Activated CD8-positive, alpha-beta T cell treated with anti-CD3 and anti-CD28 coated beads for 36 hours (primary cell): ENCODE measurements at regions of chr10 and their contacts with region 1.

Region 1: GRCh38 chr10:69914398-69915214 is 112.9 kb downstream of the COL13A1 start:
- DNase-seq: peak; percentile 81
- ATAC-seq: peak; percentile 97
- H3K4me3 Mint-ChIP-seq: no peak overlapping the region
- H3K27ac Mint-ChIP-seq: no peak overlapping the region
- H3K4me1 Mint-ChIP-seq: no peaks in the 10 kb centered on the region
- H3K27me3 Mint-ChIP-seq: peaks cover 1% of the 10 kb centered on the region
- CTCF ChIP-seq: peak; percentile 96

Region 2: GRCh38 chr10:69786791-69787190 is 127.8 kb before region 1 on chr10:
- CTCF ChIA-PET with region 1: interaction called, 40 read pairs
- POLR2A ChIA-PET with region 1: no interaction called
- intact Hi-C with region 1: loop called (anchors 10 kb)
- DNase-seq: no peak
- ATAC-seq: peak; percentile 62
- H3K4me3 Mint-ChIP-seq: no peak overlapping the region
- H3K27ac Mint-ChIP-seq: no peak overlapping the region
- H3K4me1 Mint-ChIP-seq: no peaks in the 10 kb centered on the region
- H3K27me3 Mint-ChIP-seq: peaks cover 6% of the 10 kb centered on the region
- CTCF ChIP-seq: no peak

Region 3: GRCh38 chr10:69860271-69860670 is 54.3 kb before region 1 on chr10:
- CTCF ChIA-PET with region 1: interaction called, 10 read pairs
- POLR2A ChIA-PET with region 1: no interaction called
- intact Hi-C with region 1: no loop called
- DNase-seq: peak; percentile 32
- ATAC-seq: peak; percentile 24
- H3K4me3 Mint-ChIP-seq: no peak overlapping the region
- H3K27ac Mint-ChIP-seq: no peak overlapping the region
- H3K4me1 Mint-ChIP-seq: peaks cover 5% of the 10 kb centered on the region
- H3K27me3 Mint-ChIP-seq: no peaks in the 10 kb centered on the region
- CTCF ChIP-seq: no peak

Region 4: DNA sequence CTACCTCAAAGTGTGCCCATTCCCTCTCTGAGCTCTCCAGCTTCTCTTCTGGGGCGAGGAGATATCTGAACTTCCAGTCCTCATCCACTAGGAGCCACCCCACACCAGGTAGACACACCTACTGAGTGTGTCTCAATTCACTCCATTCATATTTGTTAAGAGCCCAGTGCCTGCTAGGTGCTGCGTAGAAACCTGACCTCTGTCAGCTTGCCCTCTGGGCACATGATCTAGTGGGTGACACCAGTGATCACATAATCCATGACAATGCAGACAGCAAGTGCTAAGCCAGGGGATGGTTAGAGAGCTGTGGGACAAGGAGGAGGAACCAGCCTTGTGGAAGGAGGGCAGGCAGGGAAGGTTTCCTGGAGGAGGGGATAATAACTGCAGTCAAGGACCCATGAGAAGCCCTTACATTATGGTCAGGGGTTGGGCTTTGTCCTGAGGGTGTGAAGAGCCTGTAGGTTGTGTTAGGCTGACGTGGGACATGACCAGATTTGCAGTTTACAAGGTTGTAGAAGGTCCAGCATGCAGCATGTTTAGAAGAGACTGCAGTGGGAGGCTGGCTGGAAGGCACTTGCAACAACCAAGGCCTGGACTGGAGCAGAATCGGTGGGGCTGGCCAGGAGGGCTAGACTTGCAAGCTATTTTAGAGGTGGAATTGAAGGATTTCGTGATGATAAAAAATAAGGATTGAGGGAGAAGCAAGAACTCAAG is 31.1 kb before region 1 on chr10:
- CTCF ChIA-PET with region 1: interaction called, 14 read pairs
- POLR2A ChIA-PET with region 1: interaction called, 3 read pairs
- intact Hi-C with region 1: no loop called
- DNase-seq: no peak
- ATAC-seq: no peak
- H3K4me3 Mint-ChIP-seq: no peak overlapping the region
- H3K27ac Mint-ChIP-seq: no peak overlapping the region
- H3K4me1 Mint-ChIP-seq: no peaks in the 10 kb centered on the region
- H3K27me3 Mint-ChIP-seq: peaks cover 17% of the 10 kb centered on the region
- CTCF ChIP-seq: no peak

Region 5: GRCh38 chr10:69901628-69902505 is 12.7 kb before region 1 on chr10:
- CTCF ChIA-PET with region 1: interaction called, 26 read pairs
- POLR2A ChIA-PET with region 1: interaction called, 3 read pairs
- intact Hi-C with region 1: no loop called
- DNase-seq: peak; percentile 38
- ATAC-seq: peak; percentile 47
- H3K4me3 Mint-ChIP-seq: no peak overlapping the region
- H3K27ac Mint-ChIP-seq: no peak overlapping the region
- H3K4me1 Mint-ChIP-seq: no peaks in the 10 kb centered on the region
- H3K27me3 Mint-ChIP-seq: no peaks in the 10 kb centered on the region
- CTCF ChIP-seq: peak; percentile 33

Region 6: GRCh38 chr10:69925111-69925510 is 10.5 kb after region 1 on chr10:
- CTCF ChIA-PET with region 1: interaction called, 13 read pairs
- POLR2A ChIA-PET with region 1: no interaction called
- intact Hi-C with region 1: no loop called
- DNase-seq: no peak
- ATAC-seq: no peak
- H3K4me3 Mint-ChIP-seq: no peak overlapping the region
- H3K27ac Mint-ChIP-seq: no peak overlapping the region
- H3K4me1 Mint-ChIP-seq: no peaks in the 10 kb centered on the region
- H3K27me3 Mint-ChIP-seq: peaks cover 1% of the 10 kb centered on the region
- CTCF ChIP-seq: no peak

Region 7: GRCh38 chr10:69957886-69958555 is 43.4 kb after region 1 on chr10:
- CTCF ChIA-PET with region 1: interaction called, 24 read pairs
- POLR2A ChIA-PET with region 1: no interaction called
- intact Hi-C with region 1: no loop called
- DNase-seq: peak; percentile 37
- ATAC-seq: peak; percentile 86
- H3K4me3 Mint-ChIP-seq: no peak overlapping the region
- H3K27ac Mint-ChIP-seq: no peak overlapping the region
- H3K4me1 Mint-ChIP-seq: no peaks in the 10 kb centered on the region
- H3K27me3 Mint-ChIP-seq: peaks cover 2% of the 10 kb centered on the region
- CTCF ChIP-seq: peak; percentile 78